Heart left ventricle (tissue), 16 donors: ENCODE measurements at regions of chr1 and their contacts with region 1.

Region 1: GRCh38 chr1:229558571-229559335 is at the start of gene ABCB10:
- DNase-seq: peak; percentile 96 to 98 (median 97)
- ATAC-seq: peak; percentile 92 to 95 (median 94)
- H3K4me3 ChIP-seq: peak within 1 kb of the TSS; percentile 76 to 90 (median 80)
- H3K27ac ChIP-seq: peak within 1 kb of the TSS; percentile 75 to 97 (median 92)
- H3K4me1 ChIP-seq: peaks cover 0 to 48% (median 28%) of the 10 kb centered on the region in 12 donors
- H3K27me3 ChIP-seq: no peaks in the 10 kb centered on the region
- CTCF ChIP-seq: peak; percentile 56 to 94 (median 76)
- POLR2A ChIP-seq: peak in 1 of 2 donors; percentile 67
- total RNA-seq, gene ABCB10: 8.4 to 13.3 (median 10.8) TPM

Region 2: GRCh38 chr1:229507951-229508822 is 50.6 kb before region 1 on chr1 and contains the start of gene NUP133:
- intact Hi-C with region 1: loop called in 1 of 10 experiments (anchors 2 kb)
- DNase-seq: peak; percentile 99 to 100 (median 99)
- ATAC-seq: peak; percentile 97 to 100 (median 98)
- H3K4me3 ChIP-seq: peak within 1 kb of the TSS; percentile 64 to 99 (median 91)
- H3K27ac ChIP-seq: peak within 1 kb of the TSS; percentile 82 to 98 (median 94)
- H3K4me1 ChIP-seq: peaks cover 0 to 23% (median 16%) of the 10 kb centered on the region in 12 donors
- H3K27me3 ChIP-seq: no peaks in the 10 kb centered on the region
- CTCF ChIP-seq: peak in 1 of 12 donors; percentile 8
- POLR2A ChIP-seq: peak; percentile 44 to 91
- total RNA-seq, gene NUP133: 23.1 to 37.3 (median 31.0) TPM

Region 3: GRCh38 chr1:229579059-229579673 is 20.4 kb after region 1 on chr1:
- intact Hi-C with region 1: no loop called
- DNase-seq: peak; percentile 67 to 74 (median 72)
- ATAC-seq: peak; percentile 87 to 92 (median 89)
- H3K4me3 ChIP-seq: peak overlapping the region in 6 of 12 donors; percentile 5 to 38 (median 18)
- H3K27ac ChIP-seq: peak overlapping the region; percentile 27 to 68 (median 60)
- H3K4me1 ChIP-seq: peaks cover 4 to 32% (median 24%) of the 10 kb centered on the region in 12 donors
- H3K27me3 ChIP-seq: no peaks in the 10 kb centered on the region
- CTCF ChIP-seq: no peak
- POLR2A ChIP-seq: no peak

Region 4: DNA sequence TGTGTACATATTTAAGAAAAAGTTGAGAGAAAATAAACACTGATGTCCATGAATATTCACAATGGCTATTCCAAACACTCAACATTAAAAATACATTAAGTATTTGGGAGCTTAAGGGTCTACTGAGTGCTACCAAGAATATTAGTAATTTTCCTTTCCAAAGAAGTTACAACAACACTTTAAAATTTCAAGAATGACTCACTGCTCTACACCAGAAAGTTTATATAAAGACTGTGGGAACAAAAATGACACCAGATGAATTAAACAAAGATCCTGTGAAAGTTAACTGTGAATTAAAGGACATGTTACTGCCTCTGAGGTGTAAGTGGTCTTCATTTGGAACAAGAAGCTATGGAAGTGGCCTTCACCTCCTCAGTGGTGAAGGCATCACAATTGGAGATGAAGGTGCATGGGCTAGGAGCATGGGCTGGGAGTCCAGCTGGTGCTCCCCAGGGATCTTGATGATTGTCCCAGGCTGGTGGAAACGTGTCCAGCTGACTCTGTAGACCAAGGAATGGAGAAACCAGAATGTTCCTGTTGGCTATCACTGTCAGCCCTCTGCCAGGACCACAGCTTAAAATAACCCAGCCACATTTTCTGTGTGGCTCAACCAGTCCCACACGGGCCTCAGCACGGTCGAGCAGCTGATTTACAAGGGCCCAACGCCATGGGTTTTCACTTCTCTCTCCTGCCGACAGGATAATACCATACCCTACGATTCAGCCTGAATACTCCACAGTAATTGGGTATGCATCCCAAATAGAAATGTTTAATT is 38.4 kb after region 1 on chr1:
- intact Hi-C with region 1: loop called in 1 of 10 experiments (anchors 5 kb)
- DNase-seq: peak; percentile 66 to 82 (median 70)
- ATAC-seq: peak; percentile 95 to 97 (median 97)
- H3K4me3 ChIP-seq: peak overlapping the region in 2 of 12 donors; percentile 14 to 25
- H3K27ac ChIP-seq: peak overlapping the region; percentile 69 to 90 (median 82)
- H3K4me1 ChIP-seq: peaks cover 0 to 42% (median 29%) of the 10 kb centered on the region in 12 donors
- H3K27me3 ChIP-seq: no peaks in the 10 kb centered on the region
- CTCF ChIP-seq: peak in 2 of 12 donors; percentile 8 to 34
- POLR2A ChIP-seq: no peak

Region 5: DNA sequence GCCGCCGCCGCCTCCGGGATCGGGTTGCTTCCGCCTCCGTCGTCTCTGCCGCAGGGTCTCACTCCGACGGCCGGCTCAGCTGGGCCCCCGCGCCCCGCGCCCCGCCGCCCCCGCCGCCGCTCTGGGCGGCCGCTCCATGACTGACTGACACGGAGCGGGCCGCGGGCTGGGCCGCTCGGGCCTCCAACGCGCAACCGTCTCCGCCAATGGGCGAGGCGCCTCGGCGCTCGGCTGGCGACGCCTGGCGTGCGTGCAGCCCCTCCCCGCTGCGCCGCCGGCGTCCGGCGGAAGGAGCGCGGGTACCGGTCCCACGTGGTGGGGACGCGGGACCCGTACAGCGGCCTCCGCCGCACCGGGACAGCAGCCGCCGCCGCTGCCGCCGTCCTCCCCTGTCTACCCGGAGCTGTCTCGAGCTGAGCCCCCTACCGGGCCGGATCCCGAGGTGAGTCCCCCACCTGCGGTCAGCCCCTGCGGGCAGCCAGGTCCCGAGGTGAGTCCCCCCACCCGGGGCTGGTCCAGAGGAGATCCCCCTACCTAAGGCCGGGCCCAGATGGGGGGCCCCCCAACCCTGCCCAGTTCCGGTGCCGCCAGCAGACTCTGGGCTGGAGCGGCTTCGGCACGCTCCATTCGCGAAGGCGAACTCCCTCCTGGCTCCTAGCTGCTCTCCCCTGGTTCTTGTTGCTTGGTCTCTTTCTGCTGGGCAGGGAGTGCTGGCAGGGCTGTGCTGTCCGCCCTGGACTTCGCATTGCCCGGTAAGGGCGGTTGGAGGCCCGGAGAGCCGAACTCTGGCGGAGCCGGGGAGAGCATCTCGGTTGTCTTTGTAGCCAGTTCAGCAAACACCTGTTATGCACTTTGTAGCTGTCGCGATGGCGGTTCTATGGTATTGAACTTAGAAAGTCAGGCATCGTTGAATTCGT is 67.4 kb after region 1 on chr1 and contains the starts of genes TAF5L and URB2:
- intact Hi-C with region 1: loop called (anchors 1 to 2 kb)
- DNase-seq: peak; percentile 89 to 94 (median 93)
- ATAC-seq: peak; percentile 91 to 98 (median 98)
- H3K4me3 ChIP-seq: peak within 1 kb of the TSS; percentile 80 to 98 (median 95)
- H3K27ac ChIP-seq: peak within 1 kb of the TSS; percentile 80 to 97 (median 88)
- H3K4me1 ChIP-seq: peaks cover 2 to 50% (median 37%) of the 10 kb centered on the region in 12 donors
- H3K27me3 ChIP-seq: no peaks in the 10 kb centered on the region
- CTCF ChIP-seq: peak in 2 of 12 donors; percentile 13 to 27
- POLR2A ChIP-seq: peak in 1 of 2 donors; percentile 74
- total RNA-seq, gene TAF5L: 7.1 to 15.4 (median 11.1) TPM
- total RNA-seq, gene URB2: 2.6 to 6.7 (median 5.0) TPM

Region 6: GRCh38 chr1:230066466-230067404 is 508.0 kb after region 1 on chr1 and contains the start of gene GALNT2:
- intact Hi-C with region 1: loop called in 1 of 10 experiments (anchors 5 kb)
- DNase-seq: peak; percentile 92 to 94 (median 93)
- ATAC-seq: peak; percentile 88 to 98 (median 94)
- H3K4me3 ChIP-seq: peak within 1 kb of the TSS; percentile 63 to 97 (median 84)
- H3K27ac ChIP-seq: peak within 1 kb of the TSS; percentile 79 to 92 (median 88)
- H3K4me1 ChIP-seq: peaks cover 0 to 48% (median 22%) of the 10 kb centered on the region in 12 donors
- H3K27me3 ChIP-seq: no peaks in the 10 kb centered on the region
- CTCF ChIP-seq: no peak
- POLR2A ChIP-seq: peak; percentile 57 to 80
- total RNA-seq, gene GALNT2: 21.0 to 44.9 (median 31.6) TPM

Region 7: GRCh38 chr1:230310381-230311163 is 751.8 kb after region 1 on chr1:
- intact Hi-C with region 1: loop called in 5 of 10 experiments (anchors 5 to 10 kb)
- DNase-seq: peak; percentile 67 to 82 (median 71)
- ATAC-seq: peak; percentile 75 to 88 (median 86)
- H3K4me3 ChIP-seq: no peak overlapping the region
- H3K27ac ChIP-seq: no peak overlapping the region
- H3K4me1 ChIP-seq: peaks cover 0 to 16% (median 1%) of the 10 kb centered on the region in 12 donors
- H3K27me3 ChIP-seq: peaks cover 0 to 9% (median 0%) of the 10 kb centered on the region in 9 donors
- CTCF ChIP-seq: peak; percentile 85 to 96 (median 92)
- POLR2A ChIP-seq: no peak